ENCODE measurements at regions of chr6 and their contacts with region 1.

Region 1: DNA sequence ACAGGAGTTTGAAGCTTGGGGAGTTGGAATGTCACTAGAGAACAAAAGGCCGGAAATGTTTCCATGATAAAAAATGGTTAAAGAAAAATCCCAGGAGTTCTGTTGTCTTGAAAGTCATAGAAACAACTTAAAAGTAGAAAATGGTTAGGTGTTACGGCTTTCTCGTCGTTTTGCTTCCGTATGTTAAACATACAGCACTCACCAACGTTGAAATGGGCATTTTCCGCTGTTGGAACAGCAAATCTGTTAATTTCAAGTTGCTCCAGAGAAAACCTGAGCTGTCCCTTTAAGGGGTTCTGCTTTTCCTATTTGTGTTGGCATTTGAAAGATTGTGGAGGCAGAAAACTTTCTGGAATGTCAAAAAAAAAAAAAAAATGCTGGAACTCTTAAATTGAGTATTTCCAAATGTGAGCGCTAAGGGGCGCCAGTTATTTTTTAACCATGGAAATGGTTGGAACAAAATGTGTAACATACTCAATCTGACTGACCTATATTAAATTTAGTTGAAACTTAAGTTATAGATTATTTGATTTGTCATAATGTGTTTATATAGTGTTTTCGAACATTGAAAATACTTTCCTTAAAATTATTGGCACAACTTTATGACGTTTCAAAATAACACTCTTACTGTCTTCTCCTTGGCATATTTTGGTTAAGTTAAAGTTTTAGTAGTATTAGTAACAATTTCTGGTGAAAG is 2.2 kb downstream of the QKI start:
- DNase-seq: peak in 1 of 2 donors; percentile 55
- H3K4me3 ChIP-seq: peak overlapping the region; percentile 96 to 99
- H3K27ac ChIP-seq: peak overlapping the region; percentile 97 to 100
- H3K4me1 ChIP-seq: peaks cover 0 to 54% (median 14%) of the 10 kb centered on the region in 4 donors
- H3K27me3 ChIP-seq: no peaks in the 10 kb centered on the region
- CTCF ChIP-seq: peak; percentile 62 to 66

Region 2: DNA sequence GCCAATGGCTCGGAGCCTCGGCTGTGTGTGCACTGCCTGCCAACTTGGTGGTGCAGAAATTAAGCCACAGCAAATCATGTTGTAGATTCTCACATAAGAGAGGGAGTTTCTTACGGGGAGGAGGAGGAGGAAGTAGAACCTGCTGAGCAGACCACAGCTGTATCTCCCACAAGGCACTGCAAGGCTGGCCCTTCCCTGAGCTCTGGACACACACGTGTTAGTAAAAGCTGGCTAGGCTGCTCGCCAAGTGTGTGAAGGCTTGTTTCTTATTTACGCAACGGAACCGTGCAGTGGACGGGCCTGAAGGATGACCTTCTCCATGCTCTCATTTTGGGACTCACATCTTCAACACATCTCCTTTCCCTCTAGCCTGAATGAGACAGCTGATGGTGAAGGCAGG is 17.9 kb before region 1 on chr6:
- intact Hi-C with region 1: no loop called
- DNase-seq: peak; percentile 66 to 73
- H3K4me3 ChIP-seq: no peak overlapping the region
- H3K27ac ChIP-seq: no peak overlapping the region
- H3K4me1 ChIP-seq: peaks cover 0 to 5% (median 0%) of the 10 kb centered on the region in 4 donors
- H3K27me3 ChIP-seq: no peaks in the 10 kb centered on the region
- CTCF ChIP-seq: no peak

Region 3: DNA sequence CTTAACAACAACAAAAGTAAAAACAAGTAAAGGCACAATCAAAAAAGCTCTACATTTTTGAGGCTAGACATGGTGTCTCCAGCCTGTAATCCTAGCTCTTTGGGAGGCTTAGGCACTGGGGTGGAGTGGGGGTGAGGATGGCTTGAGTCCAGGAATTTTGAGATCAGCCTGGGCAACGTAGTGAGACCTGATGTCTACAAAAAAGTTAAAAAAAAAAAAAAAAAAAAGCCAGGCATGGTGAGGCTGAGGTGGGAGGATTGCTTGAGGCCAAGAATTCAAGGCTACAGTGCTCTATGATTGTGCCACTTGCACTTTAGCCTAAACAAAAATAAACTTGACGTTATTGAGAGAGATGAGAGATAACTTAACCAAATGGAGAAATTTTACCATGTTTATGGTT is 57.9 kb after region 1 on chr6:
- intact Hi-C with region 1: no loop called
- DNase-seq: no peak
- H3K4me3 ChIP-seq: no peak overlapping the region
- H3K27ac ChIP-seq: no peak overlapping the region
- H3K4me1 ChIP-seq: peaks cover 0 to 28% (median 0%) of the 10 kb centered on the region in 4 donors
- H3K27me3 ChIP-seq: no peaks in the 10 kb centered on the region
- CTCF ChIP-seq: no peak

Region 4: DNA sequence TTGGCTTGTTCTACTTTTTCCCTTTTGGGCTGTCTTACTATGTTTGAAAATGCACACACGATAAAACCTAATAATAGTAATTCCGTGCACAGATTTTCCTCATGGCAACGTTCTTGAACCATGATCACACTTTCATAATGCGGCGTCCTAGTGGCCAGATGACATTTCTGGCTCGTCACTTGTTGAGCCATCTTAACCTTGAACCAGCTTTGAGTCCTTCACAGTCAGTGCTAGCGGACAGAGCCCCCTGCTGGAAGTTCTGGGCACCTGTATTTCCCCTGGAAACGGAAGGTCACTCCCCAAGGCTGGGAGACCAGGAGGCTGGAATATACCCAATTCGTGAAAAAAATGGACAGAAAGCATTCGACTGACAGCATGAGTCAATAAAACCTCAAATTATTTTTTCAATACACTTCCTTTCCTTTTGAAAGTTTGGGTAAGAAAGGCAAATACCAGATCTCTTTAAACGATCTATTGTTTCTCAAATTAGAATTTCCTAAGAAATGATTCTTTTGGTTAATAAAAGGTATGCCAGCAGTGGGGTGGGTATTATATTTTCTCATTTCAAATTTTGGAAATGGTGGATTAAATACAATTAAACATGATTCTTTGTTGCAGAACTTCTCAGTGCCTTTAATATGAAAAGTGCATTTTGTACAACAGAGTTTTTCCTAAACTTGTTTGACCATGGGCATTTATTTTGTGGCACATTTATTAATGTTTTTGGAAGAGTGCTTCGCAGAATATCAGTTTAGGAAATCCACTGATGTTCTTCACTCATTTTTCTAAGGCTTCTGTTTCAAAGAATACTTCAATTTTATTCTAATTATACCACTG is 540.1 kb after region 1 on chr6:
- intact Hi-C with region 1: loop called (anchors 5 kb)
- DNase-seq: peak; percentile 82 to 83
- H3K4me3 ChIP-seq: no peak overlapping the region
- H3K27ac ChIP-seq: no peak overlapping the region
- H3K4me1 ChIP-seq: peaks cover 0 to 7% (median 0%) of the 10 kb centered on the region in 4 donors
- H3K27me3 ChIP-seq: no peaks in the 10 kb centered on the region
- CTCF ChIP-seq: peak; percentile 74 to 83

Measured in tibial artery (tissue), 4 donors.